Posterior vena cava (tissue), 2 donors: ENCODE measurements at regions of chr12 and their contacts with region 1.

Region 1: DNA sequence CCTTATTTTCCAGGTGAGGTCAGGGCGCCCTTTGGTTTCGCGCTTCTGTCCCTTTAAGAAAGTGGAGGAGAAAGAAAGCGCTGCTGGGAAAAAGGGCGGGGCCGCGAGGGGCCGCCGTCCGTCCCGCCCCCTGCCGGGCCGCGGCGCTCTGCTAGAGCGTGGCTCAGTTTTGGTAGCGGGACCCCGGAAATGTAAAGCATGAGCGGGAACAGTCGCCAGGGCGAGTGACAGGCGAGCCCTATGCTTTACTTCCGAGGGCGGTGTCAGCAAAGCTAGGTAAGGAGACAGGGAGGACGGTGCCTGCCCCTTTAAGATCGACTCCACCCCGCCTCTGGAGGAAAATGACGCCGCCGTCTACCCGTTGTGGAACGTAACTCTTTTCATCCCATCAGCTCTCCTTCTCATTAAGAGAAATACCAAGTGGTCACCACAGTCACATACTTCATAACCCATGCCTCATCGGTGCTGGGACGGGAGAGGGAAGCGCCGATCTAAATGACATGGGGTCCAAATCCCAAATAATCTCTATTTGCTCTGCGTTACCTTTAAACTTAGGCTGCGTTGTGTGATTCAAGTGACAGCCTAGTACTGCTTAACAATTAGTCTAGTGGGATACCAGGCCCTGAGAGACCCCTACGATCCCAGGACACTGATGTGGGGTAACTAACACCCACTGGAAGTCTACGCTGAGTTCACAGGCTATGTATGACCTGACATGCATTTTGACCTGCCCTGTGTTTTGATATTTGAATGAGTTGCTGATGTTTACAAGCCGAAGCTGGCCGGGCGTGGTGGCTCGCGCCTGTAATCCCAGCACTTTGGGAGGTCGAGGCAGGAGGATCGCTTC is at the start of gene ETFBKMT:
- DNase-seq: peak; percentile 95
- total RNA-seq, gene ETFBKMT: 2.9 to 3.2 TPM

Region 2: GRCh38 chr12:31612819-31613218 is 46.5 kb before region 1 on chr12:
- intact Hi-C with region 1: no loop called
- DNase-seq: no peak

Region 3: GRCh38 chr12:31728917-31729640 is 69.8 kb after region 1 on chr12 and contains the start of gene AMN1:
- intact Hi-C with region 1: loop called in 1 of 2 experiments (anchors 10 kb)
- DNase-seq: peak; percentile 100
- total RNA-seq, gene AMN1: 10.5 to 12.3 TPM